ENCODE measurements at regions of chr19 and their contacts with region 1.

Region 1: DNA sequence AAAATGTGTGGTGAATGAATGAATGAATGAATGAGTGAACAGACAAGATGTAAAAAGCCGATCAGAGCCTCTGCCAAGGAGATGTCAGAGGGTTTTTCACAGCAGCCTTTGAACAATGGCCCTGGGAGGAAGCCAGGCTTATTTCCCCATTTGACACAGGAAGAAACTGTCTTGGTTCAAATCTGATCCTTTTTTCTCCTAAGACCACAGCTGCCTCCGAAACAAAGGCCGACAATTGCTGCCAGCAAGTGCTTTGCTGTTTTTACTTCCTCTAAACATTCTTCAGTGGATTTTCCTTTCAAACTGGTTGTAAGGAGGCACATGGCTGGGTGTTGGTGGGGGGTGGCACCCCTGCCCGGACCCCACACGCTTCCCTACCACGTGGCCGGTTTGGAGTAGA is 44.2 kb upstream of the HOMER3 start:
- DNase-seq: no peak
- H3K4me3 ChIP-seq: no peak overlapping the region
- H3K27ac ChIP-seq: peak overlapping the region in 2 of 4 donors; percentile 20 to 41
- H3K4me1 ChIP-seq: peaks cover 6 to 20% (median 10%) of the 10 kb centered on the region in 4 donors
- H3K27me3 ChIP-seq: peaks cover 0 to 51% (median 0%) of the 10 kb centered on the region in 4 donors
- CTCF ChIP-seq: no peak
- EP300 ChIP-seq: no peak
- POLR2A ChIP-seq: no peak

Region 2: DNA sequence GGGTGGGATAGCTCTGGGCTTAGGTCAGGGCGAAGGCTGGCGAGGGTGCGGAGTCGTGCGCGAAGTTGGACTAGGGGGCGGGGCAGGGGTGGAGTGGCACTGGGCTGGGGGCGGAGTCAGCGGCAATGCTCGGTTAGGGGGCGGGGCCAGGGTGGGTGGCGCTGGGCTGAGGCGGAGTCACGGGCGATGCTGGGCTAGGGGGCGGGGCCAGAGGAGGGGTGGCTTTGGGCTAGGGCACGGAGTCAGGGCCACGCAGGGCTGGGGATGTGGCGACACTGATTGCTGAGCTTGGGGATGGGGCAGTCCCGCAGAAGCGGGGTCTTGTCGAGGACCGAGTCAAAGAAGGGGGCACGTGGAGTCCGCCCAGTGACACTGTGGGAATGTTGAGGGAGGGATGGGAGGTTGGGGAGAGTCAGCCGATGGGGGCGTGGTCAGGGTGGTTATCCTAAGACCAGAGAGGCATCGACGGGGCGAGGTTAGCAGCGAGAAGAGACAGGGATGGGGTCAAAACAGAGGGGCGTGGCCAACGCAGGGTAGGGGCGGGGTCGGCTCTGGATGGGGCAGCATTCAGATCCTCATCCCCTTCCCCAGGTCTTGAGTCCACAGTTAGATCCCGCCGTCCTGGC is 52.9 kb before region 1 on chr19:
- intact Hi-C with region 1: loop called (anchors 10 kb)
- DNase-seq: no peak
- H3K4me3 ChIP-seq: peak overlapping the region; percentile 24 to 33 (median 30)
- H3K27ac ChIP-seq: peak overlapping the region in 1 of 4 donors; percentile 36
- H3K4me1 ChIP-seq: peaks cover 0 to 14% (median 12%) of the 10 kb centered on the region in 4 donors
- H3K27me3 ChIP-seq: no peaks in the 10 kb centered on the region
- CTCF ChIP-seq: no peak
- EP300 ChIP-seq: no peak
- POLR2A ChIP-seq: no peak

Region 3: DNA sequence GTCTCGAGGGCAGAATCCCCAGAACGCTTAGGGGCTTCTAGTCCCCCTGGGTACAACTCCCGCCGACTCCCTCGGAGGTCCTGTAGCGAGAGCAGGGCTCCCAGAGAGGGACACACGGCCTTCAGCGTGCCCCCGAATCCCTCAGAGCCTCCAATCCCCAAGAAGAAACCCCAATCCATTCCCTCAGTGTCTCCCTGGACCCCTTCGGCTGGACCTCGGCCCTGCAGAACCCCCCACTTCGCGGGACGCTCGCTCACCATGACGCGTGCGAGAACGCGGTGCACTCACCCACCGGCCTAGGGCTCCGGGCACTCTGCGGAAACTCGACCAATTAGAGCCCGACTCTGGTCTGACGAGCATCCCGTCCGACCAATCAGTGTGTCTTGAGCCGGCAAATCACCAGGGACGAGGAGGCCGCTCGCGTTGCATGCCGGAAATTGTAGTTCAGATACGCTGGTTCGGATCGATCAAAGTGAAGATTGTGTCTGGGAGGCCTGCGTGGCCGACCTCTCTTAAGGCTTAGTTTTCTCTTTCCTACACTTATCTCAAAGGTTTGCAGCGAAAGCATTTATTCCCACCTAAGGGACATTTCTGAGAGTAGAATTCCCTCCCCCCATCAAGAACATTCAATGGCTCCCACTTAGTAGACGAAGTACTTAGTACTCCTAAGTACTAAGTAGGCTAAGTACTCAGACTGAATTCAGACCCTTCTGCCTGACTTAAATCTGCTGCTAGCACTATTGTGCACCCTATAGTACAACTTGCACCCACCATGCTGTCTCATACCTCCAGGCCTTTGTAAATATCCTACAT is 153.1 kb after region 1 on chr19 and contains the start of gene TMEM161A:
- intact Hi-C with region 1: no loop called
- DNase-seq: peak; percentile 99
- H3K4me3 ChIP-seq: peak within 1 kb of the TSS; percentile 65 to 84 (median 82)
- H3K27ac ChIP-seq: peak within 1 kb of the TSS; percentile 46 to 82 (median 80)
- H3K4me1 ChIP-seq: peaks cover 8 to 27% (median 17%) of the 10 kb centered on the region in 4 donors
- H3K27me3 ChIP-seq: no peaks in the 10 kb centered on the region
- CTCF ChIP-seq: no peak
- EP300 ChIP-seq: no peak
- POLR2A ChIP-seq: peak; percentile 26
- total RNA-seq, gene TMEM161A: 12.0 to 26.8 (median 16.9) TPM